Activated T-helper 2 cell treated with anti-CD3 and anti-CD28 coated beads, Interferon-gamma antibody, Interleukin-2, Interleukin-4, amounts not matched to agents 10 μg/mL and 5 μg/mL and 100 μg/mL, durations not matched to agents 14 hours and 24 hours and 36 hours (primary cell): ENCODE measurements at regions of chr6 and their contacts with region 1.

Region 1: GRCh38 chr6:89242574-89243330 is 25.6 kb upstream of the GABRR1 start:
- DNase-seq: no peak
- H3K4me3 Mint-ChIP-seq: no peak overlapping the region
- H3K27ac Mint-ChIP-seq: no peak overlapping the region
- H3K4me1 Mint-ChIP-seq: peaks cover 9% of the 10 kb centered on the region
- H3K27me3 Mint-ChIP-seq: peaks cover 19% of the 10 kb centered on the region

Region 2: GRCh38 chr6:87723170-87724078 is 1519.3 kb before region 1 on chr6:
- intact Hi-C with region 1: no loop called
- DNase-seq: no peak
- H3K4me3 Mint-ChIP-seq: no peak overlapping the region
- H3K27ac Mint-ChIP-seq: no peak overlapping the region
- H3K4me1 Mint-ChIP-seq: peaks cover 26% of the 10 kb centered on the region
- H3K27me3 Mint-ChIP-seq: peaks cover 3% of the 10 kb centered on the region

Region 3: GRCh38 chr6:88982720-88983119 is 260.0 kb before region 1 on chr6:
- intact Hi-C with region 1: loop called (anchors 1 kb)
- DNase-seq: no peak
- H3K4me3 Mint-ChIP-seq: no peak overlapping the region
- H3K27ac Mint-ChIP-seq: no peak overlapping the region
- H3K4me1 Mint-ChIP-seq: no peaks in the 10 kb centered on the region
- H3K27me3 Mint-ChIP-seq: peaks cover 10% of the 10 kb centered on the region

Region 4: GRCh38 chr6:89122625-89123024 is 120.1 kb before region 1 on chr6:
- intact Hi-C with region 1: loop called (anchors 5 kb)
- DNase-seq: no peak
- H3K4me3 Mint-ChIP-seq: no peak overlapping the region
- H3K27ac Mint-ChIP-seq: no peak overlapping the region
- H3K4me1 Mint-ChIP-seq: peaks cover 1% of the 10 kb centered on the region
- H3K27me3 Mint-ChIP-seq: peaks cover 28% of the 10 kb centered on the region

Region 5: GRCh38 chr6:89432875-89433251 is 190.1 kb after region 1 on chr6 and contains the start of gene ANKRD6:
- intact Hi-C with region 1: no loop called
- DNase-seq: peak; percentile 73
- H3K4me3 Mint-ChIP-seq: peak within 1 kb of the TSS; percentile 79
- H3K27ac Mint-ChIP-seq: peak within 1 kb of the TSS; percentile 20
- H3K4me1 Mint-ChIP-seq: peaks cover 14% of the 10 kb centered on the region
- H3K27me3 Mint-ChIP-seq: peaks cover 55% of the 10 kb centered on the region
- total RNA-seq, gene ANKRD6: 2.2 TPM in 2 replicates